ENCODE measurements at regions of chr12 and their contacts with region 1.

Region 1: DNA sequence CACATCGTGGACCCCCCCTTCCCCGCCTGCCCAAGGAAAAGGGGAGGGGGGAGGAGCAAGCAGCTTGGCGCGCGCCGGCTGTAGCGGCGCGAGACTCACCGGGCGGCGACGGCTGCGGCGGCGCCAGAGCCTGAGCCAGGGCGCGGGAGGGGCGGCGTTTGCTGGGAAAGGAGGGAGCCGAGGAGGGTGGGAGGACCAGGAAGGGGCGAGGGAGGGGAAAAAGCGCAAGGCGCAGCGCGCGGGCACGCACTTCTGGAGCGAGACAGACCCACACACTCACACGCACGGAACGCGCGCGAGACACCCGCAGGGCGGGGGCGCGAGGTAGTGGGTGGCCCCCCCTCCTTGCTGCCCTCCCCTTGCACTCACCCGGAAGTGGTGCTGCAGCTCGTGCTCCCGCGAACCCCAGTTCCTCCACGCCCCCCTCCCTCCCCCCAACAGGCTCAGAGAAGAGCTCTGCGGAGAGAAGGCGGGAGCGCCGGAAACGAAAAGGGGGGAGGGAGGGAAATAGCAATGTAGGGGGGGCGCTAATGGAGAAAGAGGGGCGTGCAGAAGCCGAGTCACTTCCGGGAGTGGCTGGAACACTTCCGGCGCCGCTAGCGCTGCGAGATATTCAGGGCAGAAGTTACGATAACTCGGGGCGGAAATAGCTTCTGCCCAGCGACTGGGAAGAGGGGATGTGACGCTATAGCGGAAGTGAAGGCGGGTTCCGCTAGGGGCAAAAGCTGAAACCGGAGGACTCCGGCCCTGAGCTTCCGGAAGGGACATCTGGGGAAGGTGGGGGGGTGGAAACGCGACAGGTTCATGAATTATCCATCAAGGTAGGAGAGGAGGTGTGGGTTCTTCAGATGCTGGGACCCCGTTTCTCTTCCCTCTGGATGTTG is at the start of gene ZNF384:
- DNase-seq: peak; percentile 97
- H3K4me3 ChIP-seq: peak within 1 kb of the TSS; percentile 83
- H3K27me3 ChIP-seq: no peaks in the 10 kb centered on the region
- CTCF ChIP-seq: 0 out of 2 replicates have a peak, but pooled peaks have one; percentile 6
- polyA plus RNA-seq, gene ZNF384: 38.8 and 57.0 TPM in 2 replicates

Region 2: GRCh38 chr12:6507102-6507998 is 181.9 kb before region 1 on chr12:
- CTCF ChIA-PET with region 1: no interaction called
- POLR2A ChIA-PET with region 1: no interaction called
- DNase-seq: no peak
- H3K4me3 ChIP-seq: no peak overlapping the region
- H3K27me3 ChIP-seq: no peaks in the 10 kb centered on the region
- CTCF ChIP-seq: no peak

Region 3: DNA sequence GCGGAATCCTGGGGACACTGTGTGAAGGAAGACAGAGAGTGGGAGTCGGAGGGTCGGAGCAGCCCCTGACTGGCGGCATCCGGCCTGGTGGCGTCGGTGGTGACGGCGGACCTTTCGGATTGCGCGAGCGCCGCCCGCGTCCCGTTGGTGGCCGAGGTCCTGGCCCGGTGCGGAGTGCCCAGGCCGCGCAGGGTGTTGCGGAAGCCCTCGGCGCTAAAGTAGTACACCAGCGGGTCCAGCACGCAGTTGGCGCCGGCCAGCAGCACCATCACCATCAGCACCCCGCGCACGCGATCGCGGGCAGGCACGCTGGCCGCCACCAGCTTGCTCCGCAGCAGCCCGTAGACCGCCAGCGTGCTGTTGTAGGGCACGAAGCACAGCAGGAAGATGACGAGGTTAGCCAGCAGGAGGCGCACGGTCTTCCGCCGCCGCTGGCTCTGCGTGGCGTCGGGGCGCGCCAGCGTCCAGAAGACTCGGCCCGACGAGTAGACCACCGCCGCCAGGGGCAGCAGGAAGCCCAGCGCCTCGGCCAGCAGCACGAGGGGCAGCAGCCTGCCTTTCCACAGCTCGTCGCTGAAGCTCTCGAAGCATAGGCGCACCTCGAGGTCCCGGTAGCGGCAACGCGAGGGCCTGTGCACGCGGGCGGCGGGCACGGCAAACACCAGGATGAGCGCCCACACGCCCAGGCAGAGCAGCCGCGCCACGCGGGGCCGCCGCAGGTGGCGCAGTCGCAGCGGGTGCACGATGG is 68.9 kb before region 1 on chr12:
- CTCF ChIA-PET with region 1: interaction called, 11 read pairs
- POLR2A ChIA-PET with region 1: no interaction called
- DNase-seq: no peak
- H3K4me3 ChIP-seq: 0 out of 2 replicates have a peak overlapping the region, but pooled peaks have one; percentile 2
- H3K27me3 ChIP-seq: no peaks in the 10 kb centered on the region
- CTCF ChIP-seq: peak; percentile 61

Region 4: DNA sequence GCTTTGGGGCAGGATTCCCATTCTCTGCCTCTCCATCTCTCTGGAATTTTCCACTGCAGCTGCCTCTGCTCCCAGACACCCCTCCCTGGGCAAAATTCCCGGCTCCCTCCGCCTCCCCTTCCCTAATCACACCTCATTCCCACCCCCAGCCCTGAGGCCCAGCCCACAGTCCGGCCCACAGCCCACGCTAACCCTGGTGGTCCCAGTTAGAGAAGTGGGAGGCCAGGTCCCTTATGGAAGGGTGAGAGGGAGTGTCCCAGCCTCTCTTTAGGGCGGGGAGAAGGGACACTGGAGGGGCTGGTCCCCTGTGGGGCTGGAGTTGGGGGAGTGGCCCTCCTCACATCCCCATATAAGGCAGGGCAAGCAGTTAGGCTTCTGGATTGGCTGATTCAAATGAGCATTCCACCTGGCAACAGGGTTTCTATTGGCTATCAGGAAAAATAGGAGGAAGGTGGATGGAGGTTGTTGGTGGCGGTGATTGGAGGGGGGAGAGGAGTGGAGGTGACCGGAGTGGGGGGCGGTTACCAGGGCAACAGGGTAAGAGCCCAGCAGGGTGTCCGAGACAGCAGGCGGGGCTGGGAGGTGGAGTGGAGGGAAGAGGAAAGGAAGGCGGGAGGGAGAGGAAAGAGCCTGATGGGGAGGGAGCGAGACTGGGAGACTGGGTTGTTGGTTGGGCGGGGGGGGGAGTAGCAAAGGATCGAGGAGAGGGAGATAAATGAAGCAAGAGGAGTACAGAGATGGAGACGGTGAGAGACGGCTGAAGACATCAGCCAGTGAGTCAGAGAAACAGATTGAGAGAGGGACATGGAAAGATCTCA is 75.0 kb after region 1 on chr12:
- CTCF ChIA-PET with region 1: interaction called, 11 read pairs
- POLR2A ChIA-PET with region 1: interaction called, 18 read pairs
- DNase-seq: peak; percentile 98
- H3K4me3 ChIP-seq: peak overlapping the region; percentile 24
- H3K27me3 ChIP-seq: no peaks in the 10 kb centered on the region
- CTCF ChIP-seq: no peak

Region 5: DNA sequence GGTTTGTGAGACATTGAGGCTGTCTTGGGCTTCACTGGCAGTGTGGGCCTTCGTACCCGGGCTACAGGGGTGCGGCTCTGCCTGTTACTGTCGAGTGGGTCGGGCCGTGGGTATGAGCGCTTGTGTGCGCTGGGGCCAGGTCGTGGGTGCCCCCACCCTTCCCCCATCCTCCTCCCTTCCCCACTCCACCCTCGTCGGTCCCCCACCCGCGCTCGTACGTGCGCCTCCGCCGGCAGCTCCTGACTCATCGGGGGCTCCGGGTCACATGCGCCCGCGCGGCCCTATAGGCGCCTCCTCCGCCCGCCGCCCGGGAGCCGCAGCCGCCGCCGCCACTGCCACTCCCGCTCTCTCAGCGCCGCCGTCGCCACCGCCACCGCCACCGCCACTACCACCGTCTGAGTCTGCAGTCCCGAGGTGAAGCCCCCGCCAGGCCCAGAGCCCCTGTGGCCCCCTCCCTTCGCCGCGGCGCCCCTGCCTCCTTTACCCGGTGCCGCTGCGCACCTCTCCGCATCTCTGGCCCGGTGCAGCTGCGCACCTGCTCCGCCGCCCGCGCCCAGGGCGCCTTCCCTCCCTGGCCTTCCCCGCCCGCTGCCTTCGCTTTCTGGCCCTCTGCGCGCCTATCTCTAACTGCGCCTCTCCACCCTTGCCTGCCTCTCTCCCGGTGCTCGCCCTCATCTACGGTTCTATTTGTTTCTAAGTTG is 225.2 kb after region 1 on chr12 and contains the start of gene ENO2:
- CTCF ChIA-PET with region 1: no interaction called
- POLR2A ChIA-PET with region 1: no interaction called
- DNase-seq: no peak
- H3K4me3 ChIP-seq: peak within 1 kb of the TSS; percentile 91
- H3K27me3 ChIP-seq: no peaks in the 10 kb centered on the region
- CTCF ChIP-seq: no peak
- polyA plus RNA-seq, gene ENO2: 27.9 and 29.7 TPM in 2 replicates

Measured in BJ (cell line).